ENCODE measurements at regions of chr2 and their contacts with region 1.

Region 1: GRCh38 chr2:231452799-231453508 is 11.3 kb downstream of the NCL start:
- DNase-seq: no peak
- ATAC-seq: peak; percentile 18
- H3K4me3 ChIP-seq: no peak overlapping the region
- H3K27ac ChIP-seq: no peak overlapping the region
- H3K4me1 ChIP-seq: no peaks in the 10 kb centered on the region
- H3K27me3 ChIP-seq: no peaks in the 10 kb centered on the region
- CTCF ChIP-seq: no peak
- POLR2A ChIP-seq: no peak; the same call in 1 of the 2 replicates
- RAD21 ChIP-seq: no peak

Region 2: DNA sequence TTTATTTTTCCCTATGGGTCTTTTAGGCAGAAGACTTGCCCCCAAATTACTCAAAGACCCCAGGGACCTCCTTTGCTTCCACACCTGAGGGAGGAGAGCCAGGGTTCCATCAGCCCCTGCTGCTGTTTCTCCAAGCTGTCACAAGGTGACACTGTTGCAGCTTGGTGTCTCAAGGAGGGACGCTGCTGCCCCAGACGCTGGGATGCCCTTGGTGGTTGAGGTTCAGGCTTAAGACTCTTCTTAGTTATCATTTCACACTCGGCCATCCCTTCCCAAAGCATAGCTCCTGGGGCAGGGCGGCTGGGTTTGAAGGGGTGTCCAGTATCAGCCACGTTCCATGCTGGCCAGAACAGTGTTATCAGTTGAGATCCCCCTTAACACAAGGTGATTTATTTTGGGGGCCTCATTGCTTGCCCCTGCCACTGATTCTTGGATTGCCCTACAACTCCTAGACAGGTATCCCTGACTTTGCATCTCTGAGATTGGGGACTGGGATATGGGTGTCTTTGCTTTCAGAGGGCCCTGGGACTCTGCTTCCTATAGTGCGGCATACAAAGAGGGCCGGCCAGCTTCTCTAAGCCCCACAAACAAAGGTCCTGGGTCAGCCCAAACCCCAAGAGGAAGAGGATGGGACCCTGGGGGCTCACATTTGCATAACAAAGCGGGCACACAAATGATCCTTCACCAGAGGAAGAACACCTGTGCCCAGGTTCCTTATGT is 550.6 kb before region 1 on chr2:
- CTCF ChIA-PET with region 1: no interaction called
- POLR2A ChIA-PET with region 1: no interaction called
- dilution Hi-C with region 1: no loop called
- in situ Hi-C with region 1: no loop called
- intact Hi-C with region 1: loop called (anchors 10 kb)
- DNase-seq: peak; percentile 76
- ATAC-seq: peak; percentile 99
- H3K4me3 ChIP-seq: no peak overlapping the region
- H3K27ac ChIP-seq: no peak overlapping the region
- H3K4me1 ChIP-seq: no peaks in the 10 kb centered on the region
- H3K27me3 ChIP-seq: peaks cover 31% of the 10 kb centered on the region
- CTCF ChIP-seq: peak; percentile 95
- POLR2A ChIP-seq: no peak
- RAD21 ChIP-seq: peak; percentile 94

Region 3: DNA sequence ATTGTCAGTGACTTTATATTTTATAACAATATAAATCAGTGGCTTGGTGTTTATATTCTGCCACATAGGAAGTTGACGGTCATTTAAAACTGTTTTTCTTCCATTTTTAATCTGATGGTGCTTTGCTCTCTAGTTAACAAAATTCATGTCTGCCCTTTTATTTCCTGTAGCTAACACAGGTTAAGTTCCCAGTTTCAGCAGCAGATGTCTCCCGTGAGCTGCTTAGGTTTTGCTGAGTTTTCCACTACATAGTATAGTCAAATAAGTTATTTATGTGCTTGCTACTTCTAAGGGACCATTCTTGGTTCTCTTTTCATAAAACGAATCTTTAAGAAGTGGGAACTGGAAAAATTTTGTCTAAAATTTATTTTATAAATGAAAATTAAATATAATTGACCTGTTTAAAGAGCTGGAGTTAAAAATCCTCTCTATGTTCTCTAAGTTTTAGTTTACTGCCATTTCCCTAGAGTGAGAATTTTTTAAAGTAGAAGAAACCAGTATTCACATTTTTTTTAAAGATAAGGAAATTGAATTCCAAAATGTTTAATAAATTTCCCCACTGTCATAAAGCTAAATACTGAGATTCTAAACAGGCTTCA is 348.7 kb before region 1 on chr2:
- CTCF ChIA-PET with region 1: no interaction called
- POLR2A ChIA-PET with region 1: no interaction called
- dilution Hi-C with region 1: no loop called
- in situ Hi-C with region 1: loop called (anchors 10 kb)
- intact Hi-C with region 1: loop called (anchors 2 kb)
- DNase-seq: peak; percentile 75
- ATAC-seq: peak; percentile 94
- H3K4me3 ChIP-seq: no peak overlapping the region
- H3K27ac ChIP-seq: peak overlapping the region; percentile 15; the same call in 1 of the 2 replicates
- H3K4me1 ChIP-seq: peaks cover 7% of the 10 kb centered on the region
- H3K27me3 ChIP-seq: no peaks in the 10 kb centered on the region
- CTCF ChIP-seq: peak; percentile 89
- POLR2A ChIP-seq: no peak
- RAD21 ChIP-seq: peak; percentile 90

Region 4: DNA sequence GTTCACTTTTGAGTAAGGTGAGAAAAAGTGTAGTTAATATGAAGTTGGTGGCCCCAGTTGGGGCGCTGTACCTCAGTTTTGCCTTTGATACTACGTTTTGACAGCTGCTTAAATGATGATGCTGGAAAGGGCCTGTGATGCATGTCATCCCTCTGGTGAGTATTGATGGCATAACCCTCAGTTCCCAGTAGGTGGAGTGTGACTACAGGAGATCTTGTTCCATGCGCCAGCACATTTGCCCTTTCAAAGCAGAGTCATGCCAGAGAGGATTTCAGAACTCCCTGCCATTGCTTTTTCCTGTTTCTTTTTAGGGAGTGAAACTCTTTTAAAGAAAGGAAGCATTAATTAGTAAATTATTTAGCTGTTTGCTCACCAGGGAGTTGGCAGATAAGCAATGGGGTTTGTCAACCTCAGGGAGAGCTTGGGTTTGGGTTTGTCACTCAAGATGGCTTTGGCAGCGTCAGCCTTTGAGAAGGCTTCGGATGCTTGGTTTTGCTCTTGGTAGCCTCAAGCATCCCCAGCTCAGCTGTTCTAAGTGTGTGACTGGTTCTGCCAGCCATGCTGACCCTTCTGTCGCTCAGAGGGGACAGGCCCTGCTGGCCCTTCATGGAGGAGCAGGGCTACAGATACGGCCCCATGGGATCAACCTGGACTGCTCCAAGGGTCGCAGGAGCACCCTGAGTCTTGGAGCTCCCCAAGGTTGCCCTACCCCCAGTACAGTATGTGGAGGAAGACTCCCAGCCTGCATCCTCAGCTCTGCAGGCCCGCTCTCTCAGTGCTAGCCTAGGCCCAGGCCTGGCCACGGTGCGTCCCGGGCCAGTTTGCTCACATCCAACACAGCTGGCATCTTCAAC is 225.4 kb before region 1 on chr2:
- CTCF ChIA-PET with region 1: no interaction called
- POLR2A ChIA-PET with region 1: no interaction called
- dilution Hi-C with region 1: no loop called
- in situ Hi-C with region 1: no loop called
- intact Hi-C with region 1: loop called (anchors 1 kb)
- DNase-seq: peak; percentile 79
- ATAC-seq: peak; percentile 75
- H3K4me3 ChIP-seq: no peak overlapping the region
- H3K27ac ChIP-seq: peak overlapping the region; percentile 36; the same call in 1 of the 2 replicates
- H3K4me1 ChIP-seq: peaks cover 20% of the 10 kb centered on the region
- H3K27me3 ChIP-seq: no peaks in the 10 kb centered on the region
- CTCF ChIP-seq: peak; percentile 80
- POLR2A ChIP-seq: 0 out of 2 replicates have a peak, but pooled peaks have one; percentile 29
- RAD21 ChIP-seq: peak; percentile 87

Region 5: GRCh38 chr2:231297108-231297908 is 155.6 kb before region 1 on chr2:
- CTCF ChIA-PET with region 1: no interaction called
- POLR2A ChIA-PET with region 1: no interaction called
- dilution Hi-C with region 1: no loop called
- in situ Hi-C with region 1: no loop called
- intact Hi-C with region 1: loop called (anchors 1 kb)
- DNase-seq: peak; percentile 54
- ATAC-seq: peak; percentile 98
- H3K4me3 ChIP-seq: no peak overlapping the region
- H3K27ac ChIP-seq: no peak overlapping the region
- H3K4me1 ChIP-seq: 0 out of 2 replicates have a peak, but pooled peaks cover 2% of the 10 kb centered on the region
- H3K27me3 ChIP-seq: no peaks in the 10 kb centered on the region
- CTCF ChIP-seq: peak; percentile 66
- POLR2A ChIP-seq: no peak
- RAD21 ChIP-seq: peak; percentile 78

Region 6: DNA sequence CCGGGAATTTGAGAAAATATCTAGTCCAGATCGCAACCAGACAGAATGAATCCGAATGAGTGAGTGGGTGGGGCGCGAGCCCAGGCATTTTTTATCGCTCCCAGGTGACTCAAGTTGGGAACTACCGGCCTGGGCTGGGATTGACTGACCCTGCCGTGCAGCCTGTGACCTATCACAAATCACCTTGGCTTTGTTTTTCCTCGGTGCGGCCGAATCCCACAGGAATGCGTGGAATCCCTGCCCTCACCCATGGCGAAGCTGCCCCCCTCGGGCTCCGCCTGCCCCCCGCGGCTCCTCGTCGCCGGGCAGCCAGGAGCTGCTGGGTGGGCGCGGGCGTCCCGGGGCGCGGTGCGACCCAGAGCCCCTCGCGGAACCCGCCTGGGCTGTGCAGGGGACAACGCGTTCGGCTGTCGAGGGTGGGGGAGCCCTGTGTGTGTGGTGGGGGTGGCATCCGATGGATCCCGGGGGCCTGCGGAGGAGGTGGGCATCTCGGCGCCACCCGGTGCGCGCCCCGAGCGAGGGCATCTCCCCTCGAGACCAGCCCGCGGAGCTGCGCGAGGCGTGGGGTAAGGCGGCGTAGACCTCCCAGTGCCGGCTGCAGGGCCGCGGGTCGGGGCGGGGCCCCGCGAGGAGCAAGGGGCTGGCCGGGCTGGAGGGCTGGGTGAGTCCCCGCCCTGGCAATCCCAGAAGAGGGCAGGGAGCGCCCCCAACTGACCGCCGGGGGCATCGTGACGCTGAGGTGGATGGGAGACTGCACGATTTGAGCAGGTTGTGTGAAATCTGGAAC is 40.9 kb before region 1 on chr2:
- CTCF ChIA-PET with region 1: interaction called, 4 read pairs
- POLR2A ChIA-PET with region 1: no interaction called
- dilution Hi-C with region 1: no loop called
- in situ Hi-C with region 1: no loop called
- intact Hi-C with region 1: loop called (anchors 1 kb)
- DNase-seq: peak; percentile 71
- ATAC-seq: peak; percentile 100
- H3K4me3 ChIP-seq: peak overlapping the region; percentile 63
- H3K27ac ChIP-seq: peak overlapping the region; percentile 42
- H3K4me1 ChIP-seq: 0 out of 2 replicates have a peak, but pooled peaks cover 3% of the 10 kb centered on the region
- H3K27me3 ChIP-seq: no peaks in the 10 kb centered on the region
- CTCF ChIP-seq: peak; percentile 98
- POLR2A ChIP-seq: no peak
- RAD21 ChIP-seq: peak; percentile 93

Region 7: GRCh38 chr2:231463698-231464575 is 11.0 kb after region 1 on chr2 and contains the start of gene NCL:
- CTCF ChIA-PET with region 1: interaction called, 3 read pairs
- POLR2A ChIA-PET with region 1: interaction called, 18 read pairs
- dilution Hi-C with region 1: no loop called
- in situ Hi-C with region 1: no loop called
- intact Hi-C with region 1: no loop called
- DNase-seq: peak; percentile 98
- ATAC-seq: peak; percentile 66
- H3K4me3 ChIP-seq: peak within 1 kb of the TSS; percentile 92
- H3K27ac ChIP-seq: peak within 1 kb of the TSS; percentile 99
- H3K4me1 ChIP-seq: peaks cover 2% of the 10 kb centered on the region; the same call in 1 of the 2 replicates
- H3K27me3 ChIP-seq: no peaks in the 10 kb centered on the region
- CTCF ChIP-seq: no peak
- POLR2A ChIP-seq: peak; percentile 99
- RAD21 ChIP-seq: no peak
- total RNA-seq, gene NCL: 289 and 506 TPM in 2 replicates